Left lung (tissue), 14 donors: ENCODE measurements at regions of chr17 and their contacts with region 1.

Region 1: GRCh38 chr17:27939474-27940465 is 46.6 kb upstream of the LYRM9 start:
- DNase-seq: no peak
- ATAC-seq: no peak
- H3K4me3 ChIP-seq: no peak overlapping the region
- H3K27ac ChIP-seq: no peak overlapping the region
- H3K4me1 ChIP-seq: no peaks in the 10 kb centered on the region
- H3K27me3 ChIP-seq: peaks cover 0 to 9% of the 10 kb centered on the region in 2 donors
- CTCF ChIP-seq: no peak

Region 2: DNA sequence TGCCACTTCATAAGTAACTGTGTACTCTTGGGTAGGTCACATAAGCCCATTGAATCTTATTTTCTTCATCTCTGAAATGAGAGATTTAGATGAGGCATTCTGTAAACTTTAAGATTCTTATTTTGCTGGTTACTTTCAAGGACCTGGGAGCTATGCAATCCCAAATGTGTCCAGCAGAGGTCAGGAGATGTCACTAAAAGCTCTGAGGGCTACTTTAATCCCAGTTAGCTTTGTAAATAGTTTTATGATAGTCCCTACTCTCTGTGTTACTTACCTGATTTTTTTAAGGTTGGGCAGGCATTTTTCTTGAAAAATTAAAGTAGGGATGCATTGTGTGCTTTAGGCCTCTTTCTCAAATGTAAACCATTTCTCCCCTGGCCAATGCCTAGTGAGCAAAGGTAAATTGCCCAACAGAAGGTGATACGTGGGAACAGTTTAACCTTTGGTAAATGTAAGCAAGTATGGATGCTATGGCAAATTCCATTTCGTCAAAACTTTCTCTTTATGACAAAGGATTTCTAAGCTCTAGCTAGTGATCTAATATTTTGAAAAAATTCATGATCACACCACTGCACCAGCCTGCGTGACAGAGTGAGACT is 703.0 kb before region 1 on chr17:
- intact Hi-C with region 1: no loop called
- DNase-seq: peak in 2 of 4 donors; percentile 70 to 84
- ATAC-seq: peak; percentile 88
- H3K4me3 ChIP-seq: no peak overlapping the region
- H3K27ac ChIP-seq: no peak overlapping the region
- H3K4me1 ChIP-seq: peaks cover 4 to 68% of the 10 kb centered on the region in 2 donors
- H3K27me3 ChIP-seq: no peaks in the 10 kb centered on the region
- CTCF ChIP-seq: peak; percentile 94 to 97

Region 3: GRCh38 chr17:27993723-27994310 is 54.0 kb after region 1 on chr17:
- intact Hi-C with region 1: loop called in 1 of 2 experiments (anchors 10 kb)
- DNase-seq: no peak
- ATAC-seq: no peak
- H3K4me3 ChIP-seq: no peak overlapping the region
- H3K27ac ChIP-seq: no peak overlapping the region
- H3K4me1 ChIP-seq: no peaks in the 10 kb centered on the region
- H3K27me3 ChIP-seq: no peaks in the 10 kb centered on the region
- CTCF ChIP-seq: no peak

Region 4: DNA sequence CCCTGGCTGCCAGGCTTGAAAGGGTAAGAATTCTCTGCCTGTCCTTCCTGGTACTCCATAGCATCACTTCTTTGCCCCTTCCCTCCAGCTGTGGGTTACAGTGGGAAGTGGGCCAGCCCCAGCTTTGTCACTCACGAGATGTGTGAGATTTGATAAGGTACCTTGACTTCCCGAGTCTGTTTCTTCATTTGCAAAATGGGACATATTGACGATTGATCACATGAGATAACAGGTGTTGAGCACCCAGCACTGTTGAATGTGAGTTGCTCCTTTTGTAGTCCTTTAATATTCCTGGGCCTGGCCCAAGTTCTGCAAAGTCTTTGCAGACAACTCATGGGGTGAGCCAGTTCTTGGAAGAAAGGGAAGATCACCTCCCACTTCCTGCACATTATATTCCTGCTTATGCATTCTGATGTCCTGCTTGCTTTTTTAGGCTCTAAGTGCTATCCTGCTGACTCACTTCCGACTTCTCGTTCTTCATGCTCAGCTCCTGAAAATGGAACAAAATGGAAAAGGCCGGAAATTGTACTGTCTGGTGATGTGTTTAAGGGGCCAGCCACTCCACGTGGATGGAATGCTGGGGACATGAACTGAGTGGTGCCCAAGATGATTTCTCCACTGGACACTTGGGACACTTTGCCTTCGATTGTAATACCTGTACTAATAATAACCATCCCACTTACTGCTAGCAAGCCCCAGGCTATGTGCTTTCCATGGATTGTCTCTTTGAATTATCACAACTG is 94.4 kb after region 1 on chr17:
- intact Hi-C with region 1: no loop called
- DNase-seq: no peak
- ATAC-seq: no peak
- H3K4me3 ChIP-seq: no peak overlapping the region
- H3K27ac ChIP-seq: peak overlapping the region in 1 of 2 donors; percentile 16
- H3K4me1 ChIP-seq: no peaks in the 10 kb centered on the region
- H3K27me3 ChIP-seq: no peaks in the 10 kb centered on the region
- CTCF ChIP-seq: no peak

Region 5: GRCh38 chr17:28371245-28372202 is 431.8 kb after region 1 on chr17 and contains the start of gene SARM1:
- intact Hi-C with region 1: no loop called
- DNase-seq: peak; percentile 83 to 94 (median 88)
- ATAC-seq: peak; percentile 88
- H3K4me3 ChIP-seq: peak within 1 kb of the TSS; percentile 21 to 49
- H3K27ac ChIP-seq: peak within 1 kb of the TSS; percentile 37 to 58
- H3K4me1 ChIP-seq: peaks cover 7 to 32% of the 10 kb centered on the region in 2 donors
- H3K27me3 ChIP-seq: peaks cover 0 to 37% of the 10 kb centered on the region in 2 donors
- CTCF ChIP-seq: no peak
- polyA plus RNA-seq, gene SARM1: 11.7 to 15.3 (median 12.9) TPM